Activated CD4-positive, alpha-beta memory T cell treated with anti-CD3 and anti-CD28 coated beads for 36 hours (primary cell): ENCODE measurements at regions of chrX and their contacts with region 1.

Region 1: GRCh38 chrX:46325312-46325877 is 219.8 kb downstream of the ZNF674 start:
- DNase-seq: peak; percentile 77
- H3K4me3 Mint-ChIP-seq: peak overlapping the region; percentile 23
- H3K27ac Mint-ChIP-seq: peak overlapping the region; percentile 79
- H3K4me1 Mint-ChIP-seq: peaks cover 62% of the 10 kb centered on the region
- H3K27me3 Mint-ChIP-seq: no peaks in the 10 kb centered on the region

Region 2: DNA sequence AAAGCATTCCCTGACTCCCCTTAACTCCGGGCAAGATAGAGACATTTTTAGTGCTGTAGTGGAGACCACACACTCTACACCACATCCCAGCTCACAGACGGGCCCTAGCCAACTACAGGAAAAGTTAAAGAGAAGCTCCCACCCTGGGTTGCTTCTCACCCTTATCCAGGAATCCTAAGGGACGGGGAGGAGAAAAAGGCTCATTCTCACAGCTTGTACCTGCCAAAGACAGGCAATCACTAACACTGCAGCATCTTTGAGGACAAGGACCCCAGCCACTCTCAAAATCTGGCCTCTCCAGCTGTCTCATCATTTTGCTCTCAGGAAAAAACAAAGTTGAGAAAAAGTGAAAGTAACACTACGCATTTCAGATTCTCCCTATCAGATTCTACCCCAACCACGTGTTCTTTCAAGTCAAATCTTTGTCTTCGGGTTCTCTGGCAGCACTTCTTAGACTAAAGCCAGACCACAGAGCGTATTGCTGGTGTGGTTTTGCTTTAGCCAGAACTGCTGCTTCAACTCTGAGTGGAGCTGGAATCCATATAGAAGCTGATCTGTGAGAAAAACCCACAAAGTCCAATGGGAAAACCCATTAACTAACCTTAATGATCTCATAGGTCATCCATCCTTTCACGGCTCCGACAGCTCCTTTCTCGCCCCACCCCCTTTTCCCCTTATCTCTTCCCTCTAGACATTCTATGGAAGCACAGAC is 518.8 kb before region 1 on chrX:
- CTCF ChIA-PET with region 1: no interaction called
- POLR2A ChIA-PET with region 1: no interaction called
- intact Hi-C with region 1: loop called (anchors 5 kb)
- DNase-seq: peak; percentile 68
- H3K4me3 Mint-ChIP-seq: peak overlapping the region; percentile 64
- H3K27ac Mint-ChIP-seq: peak overlapping the region; percentile 95
- H3K4me1 Mint-ChIP-seq: peaks cover 85% of the 10 kb centered on the region
- H3K27me3 Mint-ChIP-seq: no peaks in the 10 kb centered on the region

Region 3: GRCh38 chrX:46279925-46280313 is 45.5 kb before region 1 on chrX:
- CTCF ChIA-PET with region 1: no interaction called
- POLR2A ChIA-PET with region 1: no interaction called
- intact Hi-C with region 1: loop called (anchors 2 kb)
- DNase-seq: no peak
- H3K4me3 Mint-ChIP-seq: no peak overlapping the region
- H3K27ac Mint-ChIP-seq: peak overlapping the region; percentile 23
- H3K4me1 Mint-ChIP-seq: peaks cover 24% of the 10 kb centered on the region
- H3K27me3 Mint-ChIP-seq: no peaks in the 10 kb centered on the region

Region 4: DNA sequence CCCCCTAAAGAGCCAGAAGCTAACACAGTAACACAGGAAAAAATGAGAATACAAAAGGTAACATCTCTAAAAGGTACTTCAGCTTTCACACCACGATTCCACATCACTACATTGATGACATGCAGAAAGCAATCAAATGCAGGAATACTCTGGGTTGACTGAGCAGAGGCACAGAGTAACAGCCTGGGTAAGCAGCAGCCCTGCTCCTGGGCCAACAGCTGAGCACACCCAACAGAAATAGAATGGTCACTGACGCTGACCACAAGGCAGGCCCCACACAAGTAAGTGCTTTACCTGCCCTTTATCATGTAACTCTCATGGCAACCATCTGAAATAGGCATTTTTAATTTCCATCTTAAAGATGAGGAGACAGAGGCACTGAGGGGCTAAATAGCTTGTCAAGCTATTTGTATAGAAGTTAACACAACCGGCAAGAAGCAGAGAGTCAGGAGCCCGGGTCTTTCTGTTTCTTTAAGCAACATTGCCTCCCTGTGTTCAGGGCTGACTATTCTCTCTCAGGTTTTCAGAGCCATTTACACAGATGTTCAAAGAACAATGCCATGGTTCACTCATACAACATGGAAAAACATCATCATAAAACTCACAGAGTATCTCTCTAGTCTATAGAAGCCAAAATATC is 51.0 kb after region 1 on chrX:
- CTCF ChIA-PET with region 1: interaction called, 3 read pairs
- POLR2A ChIA-PET with region 1: no interaction called
- intact Hi-C with region 1: loop called (anchors 5 kb)
- DNase-seq: peak; percentile 47
- H3K4me3 Mint-ChIP-seq: no peak overlapping the region
- H3K27ac Mint-ChIP-seq: no peak overlapping the region
- H3K4me1 Mint-ChIP-seq: peaks cover 13% of the 10 kb centered on the region
- H3K27me3 Mint-ChIP-seq: no peaks in the 10 kb centered on the region

Region 5: GRCh38 chrX:46400530-46401443 is 75.4 kb after region 1 on chrX:
- CTCF ChIA-PET with region 1: no interaction called
- POLR2A ChIA-PET with region 1: no interaction called
- intact Hi-C with region 1: no loop called
- DNase-seq: no peak
- H3K4me3 Mint-ChIP-seq: no peak overlapping the region
- H3K27ac Mint-ChIP-seq: no peak overlapping the region
- H3K4me1 Mint-ChIP-seq: no peaks in the 10 kb centered on the region
- H3K27me3 Mint-ChIP-seq: no peaks in the 10 kb centered on the region

Region 6: GRCh38 chrX:46456125-46456922 is 130.9 kb after region 1 on chrX:
- CTCF ChIA-PET with region 1: no interaction called
- POLR2A ChIA-PET with region 1: no interaction called
- intact Hi-C with region 1: no loop called
- DNase-seq: no peak
- H3K4me3 Mint-ChIP-seq: no peak overlapping the region
- H3K27ac Mint-ChIP-seq: no peak overlapping the region
- H3K4me1 Mint-ChIP-seq: peaks cover 16% of the 10 kb centered on the region
- H3K27me3 Mint-ChIP-seq: no peaks in the 10 kb centered on the region